MCF 10A (cell line): ENCODE measurements at regions of chr1 and their contacts with region 1.

Region 1: DNA sequence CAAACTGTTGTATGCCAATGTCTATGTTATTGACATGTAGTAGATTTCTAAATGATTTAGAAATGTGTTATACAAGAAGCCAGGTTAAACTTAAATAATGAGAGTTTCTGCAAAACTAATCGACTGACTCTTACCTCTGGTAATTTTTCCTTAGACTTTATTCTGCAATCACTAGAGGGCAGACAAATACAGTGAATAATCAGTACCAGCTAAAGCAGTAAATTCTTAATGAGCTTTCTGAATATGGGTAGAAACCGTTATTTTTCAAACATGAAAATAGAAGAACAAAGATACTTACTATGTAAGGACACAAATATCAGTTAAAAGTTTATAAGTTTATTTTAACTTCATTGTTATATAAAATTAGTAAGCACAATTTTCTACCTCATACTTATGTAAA is 97.9 kb upstream of the RGS1 start:
- DNase-seq: peak; percentile 63
- H3K4me3 Mint-ChIP-seq: no peak overlapping the region
- H3K27ac Mint-ChIP-seq: no peak overlapping the region
- H3K4me1 Mint-ChIP-seq: peaks cover 8% of the 10 kb centered on the region
- H3K27me3 Mint-ChIP-seq: no peaks in the 10 kb centered on the region
- CTCF ChIP-seq: peak; percentile 75

Region 2: DNA sequence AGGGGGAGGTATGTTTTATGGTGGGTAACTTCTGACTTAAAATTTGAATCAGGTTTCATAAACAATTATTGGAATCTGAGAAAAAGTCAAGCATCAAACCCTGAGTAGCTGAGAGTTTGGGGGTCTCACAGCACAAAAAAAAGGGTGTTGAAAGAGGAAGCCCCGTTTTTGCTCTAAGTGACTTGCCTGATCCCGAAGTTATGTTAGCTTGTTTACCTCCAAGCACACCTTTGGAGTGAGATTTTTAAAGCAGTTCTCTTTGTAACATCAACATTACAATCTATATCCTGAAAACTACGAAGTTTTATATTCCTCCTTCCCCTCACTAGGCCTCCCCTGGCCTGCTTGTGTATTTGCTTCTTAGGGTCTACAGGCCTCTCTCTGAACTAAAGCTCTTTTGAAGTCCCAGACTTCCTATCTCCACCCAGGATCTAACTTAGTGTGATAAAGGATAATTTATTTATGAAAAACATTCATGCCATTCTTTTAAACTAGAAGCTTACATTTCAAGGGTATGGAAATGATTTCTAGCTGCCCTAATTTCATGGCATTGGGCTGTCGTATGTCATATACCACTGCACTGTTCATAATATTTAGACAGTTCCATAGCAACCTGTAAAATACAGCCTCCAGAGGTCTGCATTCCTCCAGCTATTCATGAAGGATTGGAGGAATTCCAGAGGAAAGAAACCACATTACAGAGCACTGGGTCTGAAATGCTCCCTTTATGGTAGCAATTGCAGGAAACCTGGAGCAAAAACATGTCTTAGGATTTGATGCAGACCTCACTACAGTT is 61.9 kb after region 1 on chr1:
- CTCF ChIA-PET with region 1: interaction called, 13 read pairs
- POLR2A ChIA-PET with region 1: interaction called, 5 read pairs
- intact Hi-C with region 1: no loop called
- DNase-seq: peak; percentile 41
- H3K4me3 Mint-ChIP-seq: no peak overlapping the region
- H3K27ac Mint-ChIP-seq: peak overlapping the region; percentile 84
- H3K4me1 Mint-ChIP-seq: no peaks in the 10 kb centered on the region
- H3K27me3 Mint-ChIP-seq: no peaks in the 10 kb centered on the region
- CTCF ChIP-seq: no peak

Region 3: DNA sequence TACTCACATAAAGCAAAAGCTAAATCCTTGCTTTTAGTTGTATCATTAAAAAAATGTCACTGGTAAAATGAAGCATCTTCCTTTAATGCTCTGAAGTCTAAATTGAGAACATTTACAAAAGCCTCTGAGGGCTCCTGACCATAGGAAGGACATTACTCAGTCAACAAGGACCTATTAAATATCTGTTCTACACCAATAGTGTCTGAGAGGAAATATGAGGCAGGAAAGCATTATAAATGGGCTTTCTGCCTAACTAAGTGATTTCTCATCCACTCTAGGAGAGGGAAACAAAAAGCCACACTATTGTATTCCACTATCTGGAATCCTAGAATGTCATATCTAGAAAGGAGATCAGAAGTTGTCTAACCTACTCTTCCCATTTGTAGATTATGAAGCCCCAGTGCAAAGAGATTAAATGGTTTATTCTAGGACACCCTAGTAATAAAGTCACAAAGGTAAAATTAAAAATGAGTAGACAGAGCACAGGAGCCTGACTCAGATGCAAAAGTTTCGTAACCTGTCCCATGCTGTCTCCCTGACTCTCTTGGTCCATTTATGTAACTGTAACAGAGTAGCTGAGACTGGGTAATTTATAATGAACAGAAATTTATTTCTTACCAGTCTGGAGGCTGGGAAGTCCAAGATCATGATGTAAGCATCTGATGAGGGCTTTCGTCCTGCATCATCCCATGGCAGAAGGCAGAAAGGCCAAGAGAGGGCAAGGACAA is 115.5 kb after region 1 on chr1:
- CTCF ChIA-PET with region 1: interaction called, 152 read pairs
- POLR2A ChIA-PET with region 1: no interaction called
- intact Hi-C with region 1: no loop called
- DNase-seq: peak; percentile 38
- H3K4me3 Mint-ChIP-seq: no peak overlapping the region
- H3K27ac Mint-ChIP-seq: no peak overlapping the region
- H3K4me1 Mint-ChIP-seq: no peaks in the 10 kb centered on the region
- H3K27me3 Mint-ChIP-seq: no peaks in the 10 kb centered on the region
- CTCF ChIP-seq: no peak

Region 4: GRCh38 chr1:192609110-192610079 is 131.8 kb after region 1 on chr1:
- CTCF ChIA-PET with region 1: interaction called, 98 read pairs
- POLR2A ChIA-PET with region 1: interaction called, 5 read pairs
- intact Hi-C with region 1: loop called (anchors 1 kb)
- DNase-seq: no peak
- H3K4me3 Mint-ChIP-seq: no peak overlapping the region
- H3K27ac Mint-ChIP-seq: no peak overlapping the region
- H3K4me1 Mint-ChIP-seq: no peaks in the 10 kb centered on the region
- H3K27me3 Mint-ChIP-seq: no peaks in the 10 kb centered on the region
- CTCF ChIP-seq: no peak

Region 5: GRCh38 chr1:192627901-192628300 is 150.3 kb after region 1 on chr1:
- CTCF ChIA-PET with region 1: interaction called, 12 read pairs
- POLR2A ChIA-PET with region 1: no interaction called
- intact Hi-C with region 1: no loop called
- DNase-seq: no peak
- H3K4me3 Mint-ChIP-seq: no peak overlapping the region
- H3K27ac Mint-ChIP-seq: no peak overlapping the region
- H3K4me1 Mint-ChIP-seq: no peaks in the 10 kb centered on the region
- H3K27me3 Mint-ChIP-seq: no peaks in the 10 kb centered on the region
- CTCF ChIP-seq: no peak

Region 6: DNA sequence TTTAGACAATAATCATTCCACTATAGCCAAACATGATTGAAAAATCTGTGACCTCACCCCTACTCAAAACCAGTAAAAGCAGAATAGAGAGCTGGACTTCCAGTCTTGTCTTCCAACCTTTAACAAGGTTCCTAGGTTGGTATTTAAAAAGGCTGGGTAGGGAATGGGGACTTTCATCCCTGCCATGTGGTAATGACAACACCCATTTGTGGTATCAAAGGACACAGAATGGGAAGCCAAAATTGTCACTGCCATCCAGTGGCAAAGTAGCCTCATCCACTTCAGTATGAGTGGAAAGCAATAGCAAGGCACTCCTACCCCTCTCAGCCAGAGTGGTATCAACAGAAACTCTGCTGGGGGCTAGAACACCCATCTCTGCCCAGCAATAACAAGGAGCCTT is 547.6 kb after region 1 on chr1:
- CTCF ChIA-PET with region 1: interaction called, 28 read pairs
- POLR2A ChIA-PET with region 1: interaction called, 3 read pairs
- intact Hi-C with region 1: loop called (anchors 2 kb)
- DNase-seq: no peak
- H3K4me3 Mint-ChIP-seq: no peak overlapping the region
- H3K27ac Mint-ChIP-seq: peak overlapping the region; percentile 27
- H3K4me1 Mint-ChIP-seq: no peaks in the 10 kb centered on the region
- H3K27me3 Mint-ChIP-seq: no peaks in the 10 kb centered on the region
- CTCF ChIP-seq: no peak

Region 7: DNA sequence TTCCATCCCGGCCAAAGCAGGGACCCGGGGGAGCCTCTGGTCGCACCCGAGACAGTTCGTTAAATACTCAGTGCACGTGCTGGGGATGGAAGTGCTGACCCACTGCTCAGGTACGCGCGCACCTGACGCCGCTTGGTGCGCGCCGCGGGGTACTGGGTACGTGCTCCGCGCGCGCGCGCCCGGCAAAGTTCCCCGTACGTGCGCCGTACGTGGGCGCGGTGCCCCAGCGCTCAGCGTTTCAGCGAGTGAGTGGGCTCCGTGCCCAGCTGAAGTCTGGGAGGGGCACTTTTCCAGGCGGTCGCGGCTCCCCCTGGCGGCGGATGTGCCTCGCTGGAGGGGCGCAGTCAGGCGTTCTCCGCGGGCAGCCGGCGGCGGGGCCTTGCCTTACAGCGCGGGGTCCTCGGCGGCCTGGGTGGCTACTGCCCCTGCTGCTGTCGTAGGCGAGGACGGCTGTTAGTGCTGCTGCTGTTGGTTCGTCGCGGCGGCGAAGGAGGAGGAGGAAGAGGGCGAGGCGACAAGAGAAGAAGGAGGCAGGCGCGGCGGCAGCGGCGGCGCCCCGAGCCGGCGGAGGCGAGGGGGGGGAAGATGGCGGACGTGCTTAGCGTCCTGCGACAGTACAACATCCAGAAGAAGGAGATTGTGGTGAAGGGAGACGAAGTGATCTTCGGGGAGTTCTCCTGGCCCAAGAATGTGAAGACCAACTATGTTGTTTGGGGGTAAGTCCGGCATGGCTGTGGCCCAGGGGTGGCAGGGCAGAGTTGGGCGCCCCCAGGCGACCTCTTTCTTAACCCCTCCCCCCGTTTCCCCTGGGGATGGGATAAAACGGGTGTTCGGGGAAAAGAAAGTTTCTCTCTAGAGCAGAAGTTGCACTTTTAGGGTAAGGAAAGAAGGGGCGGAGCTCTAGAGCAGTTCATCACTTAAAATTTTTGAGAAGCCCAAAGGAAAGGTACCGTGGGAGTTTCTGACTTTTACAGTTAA is 644.3 kb after region 1 on chr1 and contains the start of gene CDC73:
- CTCF ChIA-PET with region 1: no interaction called
- POLR2A ChIA-PET with region 1: interaction called, 6 read pairs
- intact Hi-C with region 1: loop called (anchors 1 kb)
- DNase-seq: peak; percentile 99
- H3K4me3 Mint-ChIP-seq: peak within 1 kb of the TSS; percentile 91
- H3K27ac Mint-ChIP-seq: peak within 1 kb of the TSS; percentile 88
- H3K4me1 Mint-ChIP-seq: peaks cover 20% of the 10 kb centered on the region
- H3K27me3 Mint-ChIP-seq: no peaks in the 10 kb centered on the region
- CTCF ChIP-seq: peak; percentile 99
- total RNA-seq, gene CDC73: 79.8 and 85.8 TPM in 2 replicates